ENCODE measurements at regions of chr6 and their contacts with region 1.

Region 1: DNA sequence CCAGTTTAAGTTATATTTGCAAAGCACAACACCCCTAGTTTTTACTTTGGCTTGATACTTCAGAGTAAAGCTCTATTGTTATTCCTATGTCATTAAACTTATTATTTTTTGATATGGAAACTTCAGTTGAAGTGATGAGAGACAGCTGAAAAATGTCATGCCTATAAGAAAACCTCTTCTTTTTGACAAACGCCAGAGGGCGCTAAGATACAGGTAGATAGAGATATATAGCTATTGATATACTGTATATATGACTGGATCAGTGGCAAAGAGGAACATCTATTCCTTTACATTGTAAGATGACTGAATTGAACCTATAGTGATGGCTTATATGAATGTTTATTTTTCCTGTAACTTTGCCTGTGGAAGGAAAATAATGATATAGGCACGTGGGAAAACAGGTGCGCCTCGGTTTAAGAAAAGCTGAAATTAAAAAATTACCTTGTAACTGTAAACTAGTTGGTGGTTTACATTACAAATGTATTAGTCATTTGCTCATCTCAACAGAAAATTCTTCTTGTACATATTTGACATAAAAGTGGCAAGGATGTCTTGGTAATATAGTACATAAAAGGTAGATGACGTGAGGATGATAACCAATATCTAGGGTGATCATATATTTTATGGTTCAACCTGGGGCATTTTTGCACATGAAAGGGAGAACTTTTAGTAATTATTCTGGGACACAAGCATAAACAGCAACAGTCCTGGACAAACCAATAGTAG is 74.1 kb downstream of the LAMA4 start:
- DNase-seq: peak; percentile 56
- ATAC-seq: peak; percentile 74
- H3K4me3 Mint-ChIP-seq: no peak overlapping the region
- H3K27ac Mint-ChIP-seq: no peak overlapping the region
- H3K4me1 Mint-ChIP-seq: peaks cover 3% of the 10 kb centered on the region
- H3K27me3 Mint-ChIP-seq: peaks cover 71% of the 10 kb centered on the region

Region 2: GRCh38 chr6:112163295-112164257 is 16.7 kb before region 1 on chr6:
- CTCF ChIA-PET with region 1: interaction called, 25 read pairs
- DNase-seq: peak; percentile 85
- ATAC-seq: peak; percentile 96
- H3K4me3 Mint-ChIP-seq: peak overlapping the region; percentile 45
- H3K27ac Mint-ChIP-seq: peak overlapping the region; percentile 30
- H3K4me1 Mint-ChIP-seq: peaks cover 20% of the 10 kb centered on the region
- H3K27me3 Mint-ChIP-seq: peaks cover 61% of the 10 kb centered on the region

Region 3: GRCh38 chr6:112311950-112312547 is 131.8 kb after region 1 on chr6:
- CTCF ChIA-PET with region 1: interaction called, 95 read pairs
- DNase-seq: no peak
- ATAC-seq: no peak
- H3K4me3 Mint-ChIP-seq: no peak overlapping the region
- H3K27ac Mint-ChIP-seq: no peak overlapping the region
- H3K4me1 Mint-ChIP-seq: no peaks in the 10 kb centered on the region
- H3K27me3 Mint-ChIP-seq: peaks cover 56% of the 10 kb centered on the region

Region 4: DNA sequence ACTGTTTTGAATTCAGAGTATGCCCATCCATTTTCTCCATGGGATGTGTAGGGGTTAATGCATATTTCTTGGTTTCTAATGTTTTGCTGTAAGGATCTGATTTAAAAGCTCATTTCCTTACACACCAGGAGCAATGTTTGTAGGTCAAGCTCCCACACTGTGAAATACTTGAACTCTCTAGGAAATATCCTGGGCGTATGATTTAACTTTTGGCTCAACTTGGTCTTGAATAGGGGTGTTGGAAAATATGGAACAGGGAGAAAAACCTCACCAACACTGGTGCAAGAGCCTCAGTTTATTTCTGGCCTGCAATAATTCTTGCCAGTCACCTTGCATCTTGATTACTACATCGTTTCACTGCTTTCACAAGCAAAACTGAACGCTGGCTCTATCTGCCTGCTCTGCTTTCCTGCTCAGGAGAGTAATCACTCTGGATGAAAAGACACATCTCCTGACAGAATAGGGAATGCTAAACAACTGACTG is 141.7 kb after region 1 on chr6:
- CTCF ChIA-PET with region 1: interaction called, 13 read pairs
- DNase-seq: no peak
- ATAC-seq: no peak
- H3K4me3 Mint-ChIP-seq: no peak overlapping the region
- H3K27ac Mint-ChIP-seq: no peak overlapping the region
- H3K4me1 Mint-ChIP-seq: no peaks in the 10 kb centered on the region
- H3K27me3 Mint-ChIP-seq: peaks cover 37% of the 10 kb centered on the region

Region 5: GRCh38 chr6:113858480-113859348 is 1678.5 kb after region 1 on chr6:
- CTCF ChIA-PET with region 1: interaction called, 10 read pairs
- DNase-seq: peak; percentile 82
- ATAC-seq: peak; percentile 95
- H3K4me3 Mint-ChIP-seq: peak overlapping the region; percentile 30
- H3K27ac Mint-ChIP-seq: no peak overlapping the region
- H3K4me1 Mint-ChIP-seq: peaks cover 18% of the 10 kb centered on the region
- H3K27me3 Mint-ChIP-seq: peaks cover 34% of the 10 kb centered on the region

Measured in activated CD8-positive, alpha-beta memory T cell treated with anti-CD3 and anti-CD28 coated beads, Interleukin-2, amount 10 ng/mL, durations not matched to agents 7 days and 5 days (primary cell).